ENCODE measurements at regions of chr12 and their contacts with region 1.

Region 1: DNA sequence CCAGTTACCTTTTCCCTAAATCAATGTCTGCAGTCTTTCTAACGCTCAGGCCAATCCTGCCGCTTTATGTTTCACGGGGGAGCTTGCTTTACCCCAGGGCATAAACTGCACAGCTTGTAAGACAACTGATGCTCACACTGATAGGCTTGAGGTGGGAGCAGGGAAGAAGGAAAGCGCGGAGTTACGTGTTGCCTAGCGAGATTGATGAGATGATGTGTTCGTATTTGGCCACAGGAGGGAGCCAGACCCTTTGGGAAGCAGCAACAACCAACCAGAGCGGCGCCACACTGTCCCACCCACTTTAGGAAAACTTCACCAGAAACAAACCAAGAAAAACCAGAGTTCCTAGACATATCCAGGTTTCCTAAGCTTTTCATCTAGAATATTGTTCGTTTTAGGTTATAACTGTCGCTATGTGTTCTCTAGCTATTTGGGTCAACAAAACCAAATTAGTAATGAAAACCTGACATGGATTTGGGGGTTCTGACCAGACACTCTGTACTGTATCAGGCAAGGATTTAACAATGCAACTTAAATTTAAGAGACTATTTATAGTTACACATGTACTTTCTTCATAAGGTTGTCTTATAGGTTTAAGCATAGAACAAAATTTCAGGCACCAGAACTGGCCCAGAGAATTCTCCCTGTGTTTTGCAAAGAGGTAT is 2.4 kb downstream of the IL26 start:
- DNase-seq: peak; percentile 59
- H3K4me3 Mint-ChIP-seq: no peak overlapping the region
- H3K27ac Mint-ChIP-seq: no peak overlapping the region
- H3K4me1 Mint-ChIP-seq: peaks cover 25% of the 10 kb centered on the region
- H3K27me3 Mint-ChIP-seq: peaks cover 44% of the 10 kb centered on the region

Region 2: GRCh38 chr12:67742461-67742860 is 480.8 kb before region 1 on chr12:
- intact Hi-C with region 1: no loop called
- DNase-seq: no peak
- H3K4me3 Mint-ChIP-seq: no peak overlapping the region
- H3K27ac Mint-ChIP-seq: no peak overlapping the region
- H3K4me1 Mint-ChIP-seq: no peaks in the 10 kb centered on the region
- H3K27me3 Mint-ChIP-seq: no peaks in the 10 kb centered on the region

Region 3: DNA sequence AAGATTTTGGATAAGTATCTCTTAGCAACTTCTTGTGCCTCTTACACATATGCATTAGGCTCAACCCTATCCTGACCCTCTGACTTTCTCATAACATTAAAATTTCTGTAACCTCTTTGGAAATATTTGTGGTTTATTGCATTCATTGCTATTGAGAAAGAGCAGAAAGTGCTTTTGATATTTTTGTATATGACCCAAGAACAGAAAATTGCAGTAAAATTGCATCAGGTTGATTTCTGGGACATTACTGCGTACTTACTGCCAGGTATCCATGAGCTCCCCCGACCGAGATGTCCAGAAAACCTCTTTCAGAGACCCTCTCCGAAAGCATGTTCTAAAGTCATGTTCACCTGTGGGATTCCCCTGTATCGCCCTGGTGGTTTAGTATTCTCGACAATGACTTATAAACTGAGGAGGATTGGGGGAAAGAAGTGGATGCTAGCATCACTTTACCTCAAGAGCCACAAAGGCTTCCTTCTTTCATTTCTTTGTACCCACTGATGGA is 44.7 kb after region 1 on chr12:
- intact Hi-C with region 1: loop called (anchors 2 kb)
- DNase-seq: no peak
- H3K4me3 Mint-ChIP-seq: no peak overlapping the region
- H3K27ac Mint-ChIP-seq: no peak overlapping the region
- H3K4me1 Mint-ChIP-seq: peaks cover 30% of the 10 kb centered on the region
- H3K27me3 Mint-ChIP-seq: peaks cover 49% of the 10 kb centered on the region

Region 4: GRCh38 chr12:68317047-68317667 is 93.9 kb after region 1 on chr12:
- intact Hi-C with region 1: loop called (anchors 1 kb)
- DNase-seq: no peak
- H3K4me3 Mint-ChIP-seq: no peak overlapping the region
- H3K27ac Mint-ChIP-seq: no peak overlapping the region
- H3K4me1 Mint-ChIP-seq: peaks cover 3% of the 10 kb centered on the region
- H3K27me3 Mint-ChIP-seq: no peaks in the 10 kb centered on the region

Region 5: GRCh38 chr12:69161829-69162228 is 938.6 kb after region 1 on chr12:
- intact Hi-C with region 1: no loop called
- DNase-seq: peak; percentile 39
- H3K4me3 Mint-ChIP-seq: no peak overlapping the region
- H3K27ac Mint-ChIP-seq: no peak overlapping the region
- H3K4me1 Mint-ChIP-seq: peaks cover 24% of the 10 kb centered on the region
- H3K27me3 Mint-ChIP-seq: no peaks in the 10 kb centered on the region